Caco-2 (cell line): ENCODE measurements at regions of chr5 and their contacts with region 1.

Region 1: GRCh38 chr5:168987543-168988300 is 313.2 kb downstream of the SLIT3 start:
- DNase-seq: peak; percentile 71 to 81
- H3K4me3 ChIP-seq: no peak overlapping the region
- H3K4me3 Mint-ChIP-seq: peak overlapping the region; percentile 43
- H3K27ac Mint-ChIP-seq: no peak overlapping the region
- H3K4me1 ChIP-seq: peaks cover 21% of the 10 kb centered on the region
- H3K4me1 Mint-ChIP-seq: peaks cover 40% of the 10 kb centered on the region
- H3K27me3 ChIP-seq: no peaks in the 10 kb centered on the region
- H3K27me3 Mint-ChIP-seq: no peaks in the 10 kb centered on the region
- CTCF ChIP-seq: peak; percentile 86 to 92

Region 2: DNA sequence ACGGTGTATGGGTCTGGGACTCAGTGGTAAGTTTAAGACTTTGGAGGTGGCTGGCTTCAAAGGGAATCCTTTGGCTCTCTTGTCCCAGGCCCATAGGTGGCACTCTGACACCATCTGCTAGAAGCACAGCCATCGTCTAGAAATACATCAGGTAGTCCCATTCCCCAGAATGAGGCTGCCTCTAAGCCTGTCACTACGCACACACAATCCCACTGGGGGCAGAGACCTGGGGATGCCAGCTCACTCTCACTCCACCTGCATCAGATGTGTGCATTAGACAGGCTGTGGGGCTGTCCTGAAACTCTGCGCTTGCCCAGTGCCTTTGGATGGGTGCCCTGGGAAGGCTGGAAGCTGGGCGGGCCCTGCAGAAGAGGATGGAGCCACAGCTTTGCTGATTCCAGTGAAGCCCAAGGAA is 281.1 kb before region 1 on chr5:
- CTCF ChIA-PET with region 1: no interaction called
- POLR2A ChIA-PET with region 1: no interaction called
- intact Hi-C with region 1: loop called (anchors 1 kb)
- DNase-seq: peak; percentile 68
- H3K4me3 ChIP-seq: no peak overlapping the region
- H3K4me3 Mint-ChIP-seq: no peak overlapping the region
- H3K27ac Mint-ChIP-seq: peak overlapping the region; percentile 30
- H3K4me1 ChIP-seq: no peaks in the 10 kb centered on the region
- H3K4me1 Mint-ChIP-seq: no peaks in the 10 kb centered on the region
- H3K27me3 ChIP-seq: no peaks in the 10 kb centered on the region
- H3K27me3 Mint-ChIP-seq: no peaks in the 10 kb centered on the region
- CTCF ChIP-seq: peak; percentile 63 to 84

Region 3: GRCh38 chr5:169149317-169149716 is 161.6 kb after region 1 on chr5:
- CTCF ChIA-PET with region 1: no interaction called
- POLR2A ChIA-PET with region 1: no interaction called
- intact Hi-C with region 1: loop called (anchors 2 kb)
- DNase-seq: peak in 1 of 2 experiments; percentile 42
- H3K4me3 ChIP-seq: no peak overlapping the region
- H3K4me3 Mint-ChIP-seq: no peak overlapping the region
- H3K27ac Mint-ChIP-seq: peak overlapping the region; percentile 51
- H3K4me1 ChIP-seq: peaks cover 21% of the 10 kb centered on the region; the same call in 1 of the 2 replicates
- H3K4me1 Mint-ChIP-seq: peaks cover 28% of the 10 kb centered on the region
- H3K27me3 ChIP-seq: no peaks in the 10 kb centered on the region
- H3K27me3 Mint-ChIP-seq: no peaks in the 10 kb centered on the region
- CTCF ChIP-seq: peak; percentile 52 to 76

Region 4: DNA sequence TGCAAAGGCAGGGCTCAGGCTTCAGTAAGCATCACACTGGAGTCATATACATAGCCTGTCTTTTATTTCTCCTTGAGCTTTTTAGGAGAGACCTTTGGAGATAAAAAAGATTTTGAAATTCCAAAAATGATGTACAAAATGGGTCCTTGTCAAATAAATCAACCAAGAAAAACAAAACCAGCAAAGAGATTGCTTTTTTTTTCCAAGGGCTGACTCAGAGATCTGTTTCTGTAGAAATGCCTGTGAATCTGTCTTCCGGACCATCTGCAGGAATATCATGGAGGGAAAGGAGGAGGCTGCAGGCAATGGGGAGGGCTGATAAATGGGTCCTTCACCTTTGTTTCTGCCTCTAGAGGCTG is 235.9 kb after region 1 on chr5:
- CTCF ChIA-PET with region 1: no interaction called
- POLR2A ChIA-PET with region 1: no interaction called
- intact Hi-C with region 1: loop called (anchors 1 kb)
- DNase-seq: peak; percentile 78 to 87
- H3K4me3 ChIP-seq: no peak overlapping the region
- H3K4me3 Mint-ChIP-seq: peak overlapping the region; percentile 39
- H3K27ac Mint-ChIP-seq: peak overlapping the region; percentile 83
- H3K4me1 ChIP-seq: peaks cover 65% of the 10 kb centered on the region
- H3K4me1 Mint-ChIP-seq: peaks cover 56% of the 10 kb centered on the region
- H3K27me3 ChIP-seq: no peaks in the 10 kb centered on the region
- H3K27me3 Mint-ChIP-seq: no peaks in the 10 kb centered on the region
- CTCF ChIP-seq: no peak

Region 5: DNA sequence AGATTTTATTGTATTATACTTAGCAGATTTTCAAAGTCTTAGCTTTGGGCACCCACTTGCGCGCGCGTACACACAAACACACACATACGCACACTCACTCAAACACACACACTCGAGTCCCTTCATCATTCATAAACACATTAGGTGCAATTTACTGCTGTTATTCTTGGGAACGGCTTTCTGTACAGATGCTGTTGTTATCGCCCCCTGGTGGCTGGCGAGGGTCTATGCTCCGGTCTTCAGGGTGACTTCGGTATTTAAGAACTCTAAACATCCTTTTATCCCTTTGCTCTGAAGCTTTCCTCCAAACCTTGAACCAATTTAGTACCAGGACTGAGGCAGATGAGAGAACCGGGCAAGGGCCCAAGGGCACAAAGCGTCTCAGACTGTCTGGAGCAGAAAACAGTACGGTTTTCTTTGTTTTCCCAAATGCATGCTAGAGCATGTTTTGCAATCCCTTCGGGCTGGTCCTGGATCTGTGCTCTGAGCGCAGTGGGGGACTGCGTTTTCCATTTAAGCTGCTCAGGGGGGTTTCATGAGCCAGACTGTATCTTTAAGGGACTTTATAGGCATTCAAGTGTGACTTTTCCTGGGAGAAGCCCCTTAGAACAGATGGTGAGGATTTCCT is 314.9 kb after region 1 on chr5:
- CTCF ChIA-PET with region 1: no interaction called
- POLR2A ChIA-PET with region 1: no interaction called
- intact Hi-C with region 1: loop called (anchors 1 kb)
- DNase-seq: peak; percentile 71 to 77
- H3K4me3 ChIP-seq: no peak overlapping the region
- H3K4me3 Mint-ChIP-seq: no peak overlapping the region
- H3K27ac Mint-ChIP-seq: peak overlapping the region; percentile 18
- H3K4me1 ChIP-seq: peaks cover 34% of the 10 kb centered on the region
- H3K4me1 Mint-ChIP-seq: peaks cover 45% of the 10 kb centered on the region
- H3K27me3 ChIP-seq: no peaks in the 10 kb centered on the region
- H3K27me3 Mint-ChIP-seq: no peaks in the 10 kb centered on the region
- CTCF ChIP-seq: peak; percentile 84 to 87